HEK293T (cell line): ENCODE measurements at regions of chr19 and their contacts with region 1.

Region 1: DNA sequence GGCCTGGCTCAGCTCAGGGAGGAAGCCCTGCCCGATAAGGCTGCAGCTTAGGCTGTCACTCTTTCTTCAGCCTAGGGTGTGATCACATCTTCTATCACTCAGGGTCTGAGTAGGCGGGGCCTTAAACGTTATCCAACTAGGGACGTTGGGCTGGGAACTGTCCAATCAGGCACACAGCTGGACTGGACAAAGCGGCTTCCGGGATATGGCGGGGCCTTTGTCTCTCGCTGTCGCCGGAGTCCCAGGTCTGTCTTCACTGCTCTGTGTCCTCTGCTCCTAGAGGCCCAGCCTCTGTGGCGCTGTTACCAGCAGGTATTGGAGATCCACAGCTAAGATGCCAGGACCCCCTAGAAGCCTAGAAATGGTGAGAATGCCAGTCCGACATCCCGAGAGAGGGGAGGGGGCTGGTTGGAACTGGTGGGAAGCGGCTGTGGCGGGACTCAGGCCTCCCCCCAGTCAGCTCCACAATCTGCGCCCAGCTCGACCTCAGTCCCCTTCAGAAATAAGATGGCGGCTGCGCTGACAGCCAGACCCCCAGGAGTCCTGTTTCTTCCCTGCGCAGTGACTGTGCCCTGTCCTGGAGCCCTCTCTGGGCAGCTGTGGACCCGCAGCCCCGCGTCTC is at the start of gene ZNF254:
- DNase-seq: no peak

Region 2: GRCh38 chr19:23882493-23882892 is 204.6 kb before region 1 on chr19:
- CTCF ChIA-PET with region 1: no interaction called
- POLR2A ChIA-PET with region 1: no interaction called
- DNase-seq: no peak

Region 3: DNA sequence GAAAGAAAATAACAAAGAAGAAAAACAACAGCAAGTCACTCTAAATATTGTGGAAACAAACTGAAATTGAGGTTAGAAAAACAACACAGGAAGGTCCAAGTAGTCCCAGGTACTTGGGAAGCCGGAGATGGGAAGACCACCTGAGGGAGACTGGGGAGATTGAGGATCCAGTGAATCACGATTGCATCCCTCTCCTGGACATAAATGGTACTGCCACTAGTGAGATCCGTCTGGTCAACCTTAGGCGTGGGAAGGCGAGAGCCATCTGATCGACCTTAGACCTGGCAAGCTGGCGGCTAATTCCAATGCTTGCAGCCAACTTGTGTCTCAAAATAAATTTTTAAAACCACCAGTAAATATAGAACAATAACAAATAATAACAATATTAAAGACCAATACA is 90.5 kb before region 1 on chr19:
- CTCF ChIA-PET with region 1: no interaction called
- POLR2A ChIA-PET with region 1: no interaction called
- DNase-seq: peak; percentile 42

Region 4: GRCh38 chr19:24033301-24033962 is 53.7 kb before region 1 on chr19:
- CTCF ChIA-PET with region 1: interaction called, 8 read pairs
- POLR2A ChIA-PET with region 1: interaction called, 12 read pairs
- DNase-seq: peak; percentile 83